ENCODE measurements at regions of chr5 and their contacts with region 1.

Region 1: DNA sequence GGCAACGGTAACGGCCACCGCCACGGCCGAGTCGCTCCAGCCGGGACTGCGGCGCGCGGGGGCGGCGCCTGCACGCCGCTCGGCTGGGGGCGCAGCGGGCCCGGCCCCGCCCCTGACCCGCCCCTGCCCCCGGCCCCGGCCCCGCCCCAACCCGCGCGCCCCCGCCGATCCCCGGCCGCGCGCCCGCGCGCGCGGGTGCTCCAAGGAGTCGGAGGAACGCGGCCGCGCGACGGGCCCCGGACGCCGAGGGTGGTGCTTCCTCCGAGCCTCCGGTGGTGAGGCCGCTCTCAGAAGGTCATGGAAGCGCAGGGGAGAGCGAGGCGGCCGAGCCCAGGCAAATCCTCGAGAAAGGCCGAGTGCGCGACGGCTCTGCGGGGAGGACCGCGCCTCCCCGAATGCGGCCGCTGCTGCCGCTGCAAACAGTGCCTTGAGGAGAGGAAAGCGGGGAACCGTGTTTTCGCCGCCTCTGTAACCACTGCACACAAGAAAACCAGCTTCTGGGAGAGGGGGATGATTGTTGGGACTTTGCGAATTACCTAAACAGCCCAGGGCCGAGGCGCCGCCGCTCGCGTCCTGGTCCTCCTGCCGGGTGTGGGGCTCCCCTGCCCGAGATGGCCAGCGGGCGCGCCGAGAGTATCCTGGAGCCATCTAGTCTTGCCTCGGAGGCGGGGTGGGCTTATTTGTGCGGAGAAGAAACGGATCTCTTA is at the start of gene LIFR:
- DNase-seq: peak; percentile 87
- ATAC-seq: peak; percentile 93 to 95
- total RNA-seq, gene LIFR: 59.7 to 68.9 TPM

Region 2: GRCh38 chr5:38094889-38095288 is 461.9 kb before region 1 on chr5:
- intact Hi-C with region 1: no loop called
- DNase-seq: no peak
- ATAC-seq: no peak

Region 3: DNA sequence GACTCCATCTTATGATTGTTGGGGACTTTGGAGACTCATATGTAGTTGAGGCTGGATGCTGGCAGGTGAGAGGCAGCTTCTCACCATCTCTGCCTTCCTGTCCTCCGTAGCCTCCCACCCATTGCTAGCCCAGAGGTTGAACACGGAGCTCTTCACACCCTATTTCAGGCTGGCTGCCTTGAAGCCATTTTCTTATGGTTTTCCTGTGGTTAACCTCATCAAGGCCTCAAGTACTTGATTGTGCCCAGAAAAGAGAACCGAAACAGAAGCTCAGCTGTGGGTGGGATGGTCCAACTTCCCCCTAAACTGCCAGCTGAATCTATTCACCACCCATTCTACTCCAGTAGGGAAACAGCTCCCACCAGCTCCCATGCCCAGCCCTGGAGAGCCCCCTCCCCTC is 103.2 kb before region 1 on chr5:
- intact Hi-C with region 1: no loop called
- DNase-seq: no peak
- ATAC-seq: no peak

Region 4: GRCh38 chr5:38666668-38667498 is 110.1 kb after region 1 on chr5:
- intact Hi-C with region 1: loop called (anchors 2 to 10 kb)
- DNase-seq: peak; percentile 49
- ATAC-seq: peak; percentile 94 to 96

Region 5: DNA sequence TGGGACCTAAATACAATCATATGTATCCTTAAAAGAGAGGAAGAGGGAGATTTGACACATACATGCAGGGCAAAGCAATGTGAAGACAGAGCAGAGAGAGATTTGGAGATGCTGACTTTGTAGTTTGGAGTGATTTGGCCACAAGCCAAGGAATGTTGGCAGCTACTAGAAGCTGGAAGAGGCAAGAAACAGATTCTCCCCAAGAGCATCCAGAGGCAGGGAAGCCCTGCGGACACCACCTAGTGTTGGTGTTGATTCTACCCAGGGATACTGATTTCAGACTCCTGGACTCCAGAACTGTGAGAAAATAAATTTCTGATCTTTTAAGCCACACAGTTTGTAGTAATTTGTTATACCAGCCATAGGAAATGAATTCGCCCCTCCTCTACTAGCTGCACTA is 224.2 kb after region 1 on chr5:
- intact Hi-C with region 1: loop called in 1 of 2 experiments (anchors 10 kb)
- DNase-seq: peak; percentile 81
- ATAC-seq: peak; percentile 73 to 83

Measured in left cardiac atrium (tissue), 4 donors.